Activated naive CD4-positive, alpha-beta T cell treated with anti-CD3 and anti-CD28 coated beads for 36 hours (primary cell): ENCODE measurements at regions of chr12 and their contacts with region 1.

Region 1: DNA sequence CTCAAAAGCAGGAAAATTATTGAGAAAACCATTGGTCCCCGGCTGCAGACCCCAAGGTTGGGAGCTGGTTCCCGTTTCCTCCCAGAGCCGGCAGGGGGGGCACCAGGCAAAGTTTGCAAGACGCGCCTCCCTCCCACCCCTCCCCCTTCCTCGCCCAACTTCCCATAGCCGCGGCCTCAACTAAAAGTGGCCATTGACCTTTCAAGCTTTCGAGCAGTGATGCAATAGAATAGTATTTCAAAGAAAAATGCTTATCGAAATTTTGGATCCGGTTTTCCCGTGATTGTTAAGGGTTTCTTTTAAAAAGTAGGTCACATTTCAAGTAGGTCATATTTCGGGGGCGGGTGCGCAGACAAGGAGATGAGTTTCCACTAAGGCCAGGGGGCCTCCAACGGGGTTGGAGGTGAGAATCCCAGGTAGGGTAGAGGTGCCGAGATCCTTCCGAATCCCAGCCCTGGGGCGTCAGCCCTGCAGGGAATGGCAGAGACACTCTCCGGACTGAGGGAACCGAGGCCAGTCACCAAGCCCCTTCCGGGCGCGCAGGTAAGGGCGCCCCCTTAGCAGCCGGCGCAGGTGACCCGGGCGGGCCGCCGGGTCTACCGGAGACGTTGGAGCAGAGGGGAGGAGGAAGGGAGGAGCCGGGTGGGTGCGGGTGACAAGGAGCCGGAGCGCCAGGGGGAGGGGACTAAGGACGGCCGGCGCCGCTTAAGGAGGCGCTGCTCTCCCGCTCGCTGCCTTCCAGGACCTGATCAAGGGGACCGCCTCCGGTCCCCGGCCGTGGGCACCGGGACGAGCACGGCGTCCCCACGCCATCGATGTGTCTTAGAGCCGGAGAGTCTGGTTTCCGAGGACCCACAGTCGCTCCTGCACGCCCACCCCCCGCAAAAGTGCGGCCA is 2.6 kb upstream of the SOCS2 start:
- DNase-seq: peak; percentile 88
- H3K4me3 Mint-ChIP-seq: peak overlapping the region; percentile 83
- H3K27ac Mint-ChIP-seq: peak overlapping the region; percentile 81
- H3K4me1 Mint-ChIP-seq: peaks cover 15% of the 10 kb centered on the region
- H3K27me3 Mint-ChIP-seq: peaks cover 17% of the 10 kb centered on the region

Region 2: GRCh38 chr12:93441617-93442410 is 128.1 kb before region 1 on chr12 and contains the start of gene UBE2N:
- CTCF ChIA-PET with region 1: no interaction called
- intact Hi-C with region 1: loop called (anchors 2 kb)
- DNase-seq: peak; percentile 96
- H3K4me3 Mint-ChIP-seq: peak within 1 kb of the TSS; percentile 95
- H3K27ac Mint-ChIP-seq: peak within 1 kb of the TSS; percentile 94
- H3K4me1 Mint-ChIP-seq: peaks cover 46% of the 10 kb centered on the region
- H3K27me3 Mint-ChIP-seq: no peaks in the 10 kb centered on the region
- total RNA-seq, gene UBE2N: 143 TPM

Region 3: DNA sequence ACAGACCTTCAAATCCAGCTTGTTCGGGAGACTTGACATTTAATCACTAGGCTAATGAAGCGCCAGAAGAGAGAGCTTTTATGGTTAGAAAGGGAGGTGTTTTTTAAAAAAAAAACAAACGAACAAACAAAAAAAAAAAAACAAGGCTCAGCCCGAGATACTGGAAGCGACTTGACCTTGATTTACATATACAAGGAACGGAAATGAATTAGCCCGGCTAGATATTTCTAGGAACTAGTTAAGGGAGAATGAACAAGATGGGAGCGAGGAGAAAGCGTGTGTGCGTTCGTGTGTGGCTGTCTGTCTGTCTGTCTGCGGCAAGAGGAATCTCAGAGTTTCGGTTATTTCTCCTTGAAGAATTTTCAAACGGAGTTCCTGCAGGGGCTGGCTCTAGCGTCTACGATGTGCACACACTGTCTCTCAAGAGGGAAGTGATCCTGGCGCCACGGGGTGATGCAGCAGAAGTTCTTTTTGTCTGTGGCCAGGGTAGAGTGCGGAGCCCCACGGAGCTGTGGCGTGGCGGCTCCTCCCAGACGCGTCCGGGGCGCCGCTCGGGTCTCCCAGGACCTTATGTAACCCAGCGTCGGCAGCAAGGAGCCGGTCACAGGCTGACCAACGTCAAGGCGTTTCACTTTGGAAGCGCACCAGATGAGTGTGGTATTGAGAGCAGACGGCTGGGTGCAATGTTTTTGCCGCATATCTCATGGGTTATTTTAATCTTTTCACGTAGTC is 21.4 kb after region 1 on chr12:
- CTCF ChIA-PET with region 1: interaction called, 6 read pairs
- intact Hi-C with region 1: loop called (anchors 1 kb)
- DNase-seq: peak; percentile 45
- H3K4me3 Mint-ChIP-seq: peak overlapping the region; percentile 87
- H3K27ac Mint-ChIP-seq: no peak overlapping the region
- H3K4me1 Mint-ChIP-seq: peaks cover 11% of the 10 kb centered on the region
- H3K27me3 Mint-ChIP-seq: peaks cover 52% of the 10 kb centered on the region

Region 4: DNA sequence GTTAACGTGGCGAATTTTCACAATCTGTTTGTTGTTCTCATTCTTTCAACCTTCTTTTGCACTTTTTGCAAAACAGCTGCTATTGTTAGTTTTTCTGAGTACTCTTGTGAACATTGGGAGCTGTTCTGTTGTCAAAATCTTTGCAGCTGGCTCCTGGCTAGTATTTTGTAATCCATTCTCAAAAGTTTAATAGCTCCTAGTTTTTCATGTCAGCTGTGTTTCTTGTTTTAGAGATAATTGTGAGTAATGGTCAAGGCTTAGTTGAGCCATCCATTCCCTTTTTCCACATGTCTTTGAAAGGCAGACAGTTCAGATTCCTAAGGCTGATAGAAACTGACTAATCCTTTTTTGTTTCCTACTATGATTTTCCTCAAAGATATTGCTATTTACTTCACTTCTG is 68.2 kb after region 1 on chr12:
- CTCF ChIA-PET with region 1: no interaction called
- intact Hi-C with region 1: no loop called
- DNase-seq: no peak
- H3K4me3 Mint-ChIP-seq: no peak overlapping the region
- H3K27ac Mint-ChIP-seq: no peak overlapping the region
- H3K4me1 Mint-ChIP-seq: no peaks in the 10 kb centered on the region
- H3K27me3 Mint-ChIP-seq: no peaks in the 10 kb centered on the region

Region 5: DNA sequence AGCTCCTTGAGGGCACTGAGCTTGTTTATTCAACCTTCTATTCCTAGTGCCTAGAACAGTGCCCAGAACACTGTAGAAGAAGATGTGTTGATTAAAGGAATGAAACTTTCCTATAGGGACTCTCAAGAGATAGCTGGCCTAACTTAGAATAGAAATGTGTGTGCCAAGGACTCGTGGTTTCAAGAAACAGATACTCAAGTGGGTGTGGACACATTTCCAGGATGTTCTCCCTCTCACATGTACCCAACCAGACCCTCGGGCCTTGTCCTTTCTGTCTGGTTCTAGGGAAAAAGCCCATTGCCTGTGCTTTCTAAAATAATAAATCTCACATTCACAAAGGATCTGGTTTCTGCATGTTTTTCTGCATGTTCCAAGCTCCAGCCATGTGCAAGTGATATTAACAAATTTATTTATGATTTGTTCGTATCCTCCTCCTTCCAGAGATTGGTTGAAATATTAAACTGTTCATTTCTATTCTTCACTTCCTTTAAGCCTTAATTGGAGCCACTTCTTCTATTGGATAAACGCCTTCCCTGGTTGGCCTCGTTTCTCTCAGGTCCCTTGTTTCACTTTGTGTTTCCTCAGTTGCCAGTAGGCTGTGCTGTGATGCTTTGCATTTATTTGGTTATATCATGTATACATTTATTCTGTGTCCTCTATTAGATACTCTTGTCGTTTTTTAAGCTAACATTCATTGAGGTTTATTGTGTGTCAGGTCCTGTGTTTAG is 197.1 kb after region 1 on chr12:
- CTCF ChIA-PET with region 1: interaction called, 12 read pairs
- intact Hi-C with region 1: loop called (anchors 1 kb)
- DNase-seq: peak; percentile 71
- H3K4me3 Mint-ChIP-seq: no peak overlapping the region
- H3K27ac Mint-ChIP-seq: no peak overlapping the region
- H3K4me1 Mint-ChIP-seq: peaks cover 17% of the 10 kb centered on the region
- H3K27me3 Mint-ChIP-seq: no peaks in the 10 kb centered on the region

Region 6: DNA sequence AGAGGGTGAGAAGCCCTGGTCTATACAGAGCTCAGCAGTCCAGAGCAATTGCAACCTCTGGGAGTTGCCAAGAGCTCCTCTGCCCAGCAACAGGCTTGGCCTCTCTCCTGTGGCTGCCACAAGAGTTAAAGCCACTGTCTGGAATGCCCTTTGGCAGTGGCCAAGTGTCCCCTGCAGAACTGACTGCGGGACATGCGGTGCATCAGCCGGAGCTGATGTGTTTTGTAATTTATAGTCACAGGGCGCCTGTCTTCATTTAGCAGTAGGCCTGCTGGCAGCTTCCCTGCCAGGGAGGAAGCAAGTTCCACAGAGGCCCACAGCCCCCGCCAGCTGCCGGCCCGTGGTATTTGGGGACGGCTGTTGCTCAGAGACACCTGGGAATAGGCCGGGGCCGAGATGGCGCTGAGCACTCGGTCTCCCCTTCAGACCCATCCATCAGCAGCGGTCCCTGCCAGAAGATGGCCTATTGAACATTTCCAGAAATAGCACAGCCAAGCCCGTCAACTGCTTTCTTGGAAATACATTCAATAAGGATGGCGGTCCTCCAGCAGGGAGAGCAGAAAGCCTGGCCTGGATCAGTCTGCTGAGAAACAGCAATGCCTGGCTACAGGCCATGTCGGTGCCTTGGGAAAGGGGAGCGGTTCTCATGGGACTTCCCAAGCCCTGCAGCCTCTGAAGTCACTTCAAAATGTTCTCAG is 324.6 kb after region 1 on chr12:
- CTCF ChIA-PET with region 1: no interaction called
- intact Hi-C with region 1: no loop called
- DNase-seq: no peak
- H3K4me3 Mint-ChIP-seq: no peak overlapping the region
- H3K27ac Mint-ChIP-seq: no peak overlapping the region
- H3K4me1 Mint-ChIP-seq: peaks cover 18% of the 10 kb centered on the region
- H3K27me3 Mint-ChIP-seq: no peaks in the 10 kb centered on the region